WTC11 (cell line): ENCODE measurements at regions of chr20 and their contacts with region 1.

Region 1: GRCh38 chr20:53216856-53217576 is 244.9 kb downstream of the TSHZ2 start:
- DNase-seq: peak; percentile 95
- ATAC-seq: peak; percentile 92
- H3K4me3 Mint-ChIP-seq: peak overlapping the region; percentile 49; the same call in 1 of the 2 replicates
- H3K27ac Mint-ChIP-seq: no peak overlapping the region; the same call in 1 of the 2 replicates
- H3K4me1 Mint-ChIP-seq: peaks cover 38% of the 10 kb centered on the region
- H3K27me3 Mint-ChIP-seq: peaks cover 22% of the 10 kb centered on the region
- CTCF ChIP-seq: peak; percentile 88

Region 2: DNA sequence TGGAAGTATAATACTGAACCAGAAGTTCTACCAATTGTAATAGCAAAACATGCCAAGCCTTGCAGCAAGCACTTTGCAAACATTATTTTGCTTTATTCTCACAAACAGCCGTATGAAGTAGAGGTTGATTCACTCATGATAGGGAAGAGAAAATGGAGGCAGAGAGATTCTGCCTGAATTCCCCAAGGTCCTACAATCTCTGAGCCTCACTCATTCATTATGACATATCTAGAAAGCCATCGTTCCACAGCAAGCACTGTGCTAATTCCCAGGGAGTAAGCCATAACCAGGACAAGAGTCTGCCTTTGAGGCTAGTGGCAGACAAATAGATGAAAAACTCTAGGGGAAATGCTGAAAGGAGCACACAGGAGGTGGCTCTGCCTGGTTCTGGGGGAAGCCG is 43.2 kb after region 1 on chr20:
- CTCF ChIA-PET with region 1: no interaction called
- POLR2A ChIA-PET with region 1: no interaction called
- DNase-seq: no peak
- ATAC-seq: no peak
- H3K4me3 Mint-ChIP-seq: no peak overlapping the region
- H3K27ac Mint-ChIP-seq: no peak overlapping the region
- H3K4me1 Mint-ChIP-seq: peaks cover 13% of the 10 kb centered on the region
- H3K27me3 Mint-ChIP-seq: no peaks in the 10 kb centered on the region; the same call in 1 of the 2 replicates
- CTCF ChIP-seq: no peak

Region 3: GRCh38 chr20:53413186-53413631 is 196.2 kb after region 1 on chr20:
- CTCF ChIA-PET with region 1: interaction called, 11 read pairs
- POLR2A ChIA-PET with region 1: no interaction called
- DNase-seq: peak; percentile 88
- ATAC-seq: peak; percentile 93
- H3K4me3 Mint-ChIP-seq: peak overlapping the region; percentile 54
- H3K27ac Mint-ChIP-seq: no peak overlapping the region
- H3K4me1 Mint-ChIP-seq: peaks cover 17% of the 10 kb centered on the region
- H3K27me3 Mint-ChIP-seq: no peaks in the 10 kb centered on the region
- CTCF ChIP-seq: peak; percentile 42; the same call in 1 of the 2 replicates